Endothelial cell of umbilical vein (primary cell): ENCODE measurements at regions of chr7 and their contacts with region 1.

Region 1: GRCh38 chr7:158067219-158067930 is 520.2 kb downstream of the PTPRN2 start:
- DNase-seq: no peak
- H3K4me3 ChIP-seq: no peak overlapping the region
- H3K27ac ChIP-seq: no peak overlapping the region
- H3K4me1 ChIP-seq: no peaks in the 10 kb centered on the region
- H3K27me3 ChIP-seq: no peaks in the 10 kb centered on the region
- CTCF ChIP-seq: no peak
- POLR2A ChIP-seq: no peak

Region 2: GRCh38 chr7:158109428-158110290 is 42.3 kb after region 1 on chr7:
- CTCF ChIA-PET with region 1: no interaction called
- POLR2A ChIA-PET with region 1: no interaction called
- dilution Hi-C with region 1: no loop called
- intact Hi-C with region 1: loop called (anchors 5 kb)
- DNase-seq: no peak
- H3K4me3 ChIP-seq: no peak overlapping the region
- H3K27ac ChIP-seq: no peak overlapping the region
- H3K4me1 ChIP-seq: no peaks in the 10 kb centered on the region
- H3K27me3 ChIP-seq: no peaks in the 10 kb centered on the region
- CTCF ChIP-seq: no peak
- POLR2A ChIP-seq: no peak